Endothelial cell of umbilical vein (primary cell): ENCODE measurements at regions of chr2 and their contacts with region 1.

Region 1: GRCh38 chr2:9205963-9206948 is at the start of gene ASAP2:
- DNase-seq: peak; percentile 70
- H3K4me3 ChIP-seq: peak within 1 kb of the TSS; percentile 61 to 91 (median 72)
- H3K27ac ChIP-seq: peak within 1 kb of the TSS; percentile 81
- H3K4me1 ChIP-seq: peaks cover 31% of the 10 kb centered on the region
- H3K27me3 ChIP-seq: no peaks in the 10 kb centered on the region
- CTCF ChIP-seq: peak; percentile 86
- POLR2A ChIP-seq: peak; percentile 46
- total RNA-seq, gene ASAP2: 75.8 and 79.2 TPM in 2 replicates

Region 2: DNA sequence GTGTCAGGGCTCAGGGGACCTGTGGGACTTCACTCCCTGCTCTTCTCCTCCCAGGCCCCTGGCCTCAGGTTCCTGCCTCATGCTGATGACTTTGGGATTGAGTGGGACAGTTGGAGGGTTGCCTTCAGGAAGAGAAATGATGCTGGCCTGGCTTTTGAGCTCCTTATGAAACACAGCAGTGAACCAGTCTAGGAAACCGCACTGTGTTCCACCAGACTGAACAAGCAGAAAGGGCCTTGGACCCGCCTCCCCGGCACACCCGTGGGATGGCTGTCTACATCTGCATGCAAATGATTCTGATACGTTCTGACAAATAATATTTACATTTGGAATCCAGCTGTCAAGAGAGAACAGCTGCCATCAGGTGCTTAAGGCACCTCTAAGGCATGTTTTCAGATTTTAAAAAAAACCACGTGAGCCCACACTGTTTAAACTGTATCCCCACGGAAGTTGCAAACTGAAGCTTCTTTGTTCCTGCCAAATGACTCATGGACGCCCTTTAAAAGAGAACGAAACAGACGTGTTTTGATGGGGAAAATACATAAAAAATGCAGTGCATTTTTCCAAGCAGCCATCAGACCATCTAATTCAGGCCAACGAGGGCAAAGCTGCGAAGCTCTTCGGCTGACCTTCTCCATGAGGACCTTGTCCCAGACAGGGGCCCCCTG is 27.2 kb before region 1 on chr2:
- CTCF ChIA-PET with region 1: interaction called, 3 read pairs
- POLR2A ChIA-PET with region 1: no interaction called
- dilution Hi-C with region 1: no loop called
- intact Hi-C with region 1: loop called (anchors 2 kb)
- DNase-seq: peak; percentile 84
- H3K4me3 ChIP-seq: no peak overlapping the region
- H3K27ac ChIP-seq: peak overlapping the region; percentile 91
- H3K4me1 ChIP-seq: peaks cover 25% of the 10 kb centered on the region
- H3K27me3 ChIP-seq: no peaks in the 10 kb centered on the region
- CTCF ChIP-seq: no peak
- POLR2A ChIP-seq: no peak

Region 3: GRCh38 chr2:9234680-9235387 is 28.6 kb after region 1 on chr2:
- CTCF ChIA-PET with region 1: interaction called, 59 read pairs
- POLR2A ChIA-PET with region 1: interaction called, 6 read pairs
- dilution Hi-C with region 1: no loop called
- intact Hi-C with region 1: loop called (anchors 1 kb)
- DNase-seq: peak; percentile 95
- H3K4me3 ChIP-seq: peak overlapping the region in 1 of 3 experiments; percentile 1
- H3K27ac ChIP-seq: peak overlapping the region; percentile 98
- H3K4me1 ChIP-seq: peaks cover 87% of the 10 kb centered on the region
- H3K27me3 ChIP-seq: no peaks in the 10 kb centered on the region
- CTCF ChIP-seq: no peak
- POLR2A ChIP-seq: peak; percentile 71

Region 4: GRCh38 chr2:9258953-9259399 is 52.7 kb after region 1 on chr2:
- CTCF ChIA-PET with region 1: interaction called, 5 read pairs
- POLR2A ChIA-PET with region 1: interaction called, 4 read pairs
- dilution Hi-C with region 1: no loop called
- intact Hi-C with region 1: loop called (anchors 2 kb)
- DNase-seq: peak; percentile 68
- H3K4me3 ChIP-seq: no peak overlapping the region
- H3K27ac ChIP-seq: peak overlapping the region; percentile 42
- H3K4me1 ChIP-seq: peaks cover 81% of the 10 kb centered on the region
- H3K27me3 ChIP-seq: no peaks in the 10 kb centered on the region
- CTCF ChIP-seq: no peak
- POLR2A ChIP-seq: no peak

Region 5: GRCh38 chr2:9326975-9327374 is 120.7 kb after region 1 on chr2:
- CTCF ChIA-PET with region 1: interaction called, 15 read pairs
- POLR2A ChIA-PET with region 1: no interaction called
- dilution Hi-C with region 1: no loop called
- intact Hi-C with region 1: loop called (anchors 1 kb)
- DNase-seq: peak; percentile 42
- H3K4me3 ChIP-seq: no peak overlapping the region
- H3K27ac ChIP-seq: peak overlapping the region; percentile 62
- H3K4me1 ChIP-seq: peaks cover 22% of the 10 kb centered on the region
- H3K27me3 ChIP-seq: no peaks in the 10 kb centered on the region
- CTCF ChIP-seq: no peak
- POLR2A ChIP-seq: no peak

Region 6: DNA sequence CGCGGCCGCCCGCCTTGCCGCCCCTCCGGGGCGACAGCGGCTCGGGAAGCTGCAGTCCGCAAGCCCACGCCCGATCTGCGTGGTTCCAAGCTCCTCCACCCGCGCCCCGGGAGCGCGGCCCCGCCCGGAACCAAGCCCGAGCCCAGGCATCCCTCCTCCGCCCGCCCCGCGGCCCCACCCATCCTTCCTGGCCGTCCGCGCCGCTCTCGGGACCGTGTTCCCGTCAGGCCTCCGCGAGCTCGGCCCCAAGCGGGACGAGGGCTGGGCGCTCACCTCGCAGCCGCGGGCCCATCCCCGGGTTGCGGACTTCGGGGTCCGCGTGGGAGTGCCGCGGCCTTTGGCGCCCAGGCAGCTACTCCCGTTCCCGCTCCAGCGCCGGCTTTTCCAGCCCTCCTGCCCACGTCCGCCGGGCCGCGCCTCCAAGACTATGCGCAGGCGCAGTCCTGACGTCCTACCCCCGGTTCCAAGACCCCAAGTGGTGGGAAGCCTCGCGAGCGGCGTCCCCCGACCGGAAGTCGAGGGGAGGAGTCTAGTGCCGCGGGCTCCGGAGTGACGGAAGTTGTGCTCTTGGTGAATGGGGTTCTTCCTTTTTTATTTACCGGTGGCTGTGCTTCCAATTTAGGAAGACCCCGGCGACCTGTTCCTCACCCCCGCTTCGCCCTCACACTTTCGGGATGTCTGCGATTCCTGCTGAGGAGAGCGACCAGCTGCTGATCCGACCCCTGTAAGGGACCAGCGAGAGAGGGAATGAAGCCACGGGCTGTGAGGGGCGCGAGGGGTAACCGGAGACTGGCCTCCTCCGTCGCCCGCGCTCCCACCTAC is 217.1 kb after region 1 on chr2 and contains the starts of genes CPSF3 and ITGB1BP1:
- CTCF ChIA-PET with region 1: no interaction called
- POLR2A ChIA-PET with region 1: no interaction called
- dilution Hi-C with region 1: no loop called
- intact Hi-C with region 1: loop called (anchors 5 kb)
- DNase-seq: peak; percentile 96
- H3K4me3 ChIP-seq: peak within 1 kb of the TSS; percentile 52 to 98 (median 75)
- H3K27ac ChIP-seq: peak within 1 kb of the TSS; percentile 62
- H3K4me1 ChIP-seq: peaks cover 16% of the 10 kb centered on the region
- H3K27me3 ChIP-seq: no peaks in the 10 kb centered on the region
- CTCF ChIP-seq: no peak
- POLR2A ChIP-seq: peak; percentile 76
- total RNA-seq, gene CPSF3: 35.6 and 37.1 TPM in 2 replicates
- total RNA-seq, gene ITGB1BP1: 95.5 and 170 TPM in 2 replicates